ENCODE measurements at regions of chr5 and their contacts with region 1.

Region 1: DNA sequence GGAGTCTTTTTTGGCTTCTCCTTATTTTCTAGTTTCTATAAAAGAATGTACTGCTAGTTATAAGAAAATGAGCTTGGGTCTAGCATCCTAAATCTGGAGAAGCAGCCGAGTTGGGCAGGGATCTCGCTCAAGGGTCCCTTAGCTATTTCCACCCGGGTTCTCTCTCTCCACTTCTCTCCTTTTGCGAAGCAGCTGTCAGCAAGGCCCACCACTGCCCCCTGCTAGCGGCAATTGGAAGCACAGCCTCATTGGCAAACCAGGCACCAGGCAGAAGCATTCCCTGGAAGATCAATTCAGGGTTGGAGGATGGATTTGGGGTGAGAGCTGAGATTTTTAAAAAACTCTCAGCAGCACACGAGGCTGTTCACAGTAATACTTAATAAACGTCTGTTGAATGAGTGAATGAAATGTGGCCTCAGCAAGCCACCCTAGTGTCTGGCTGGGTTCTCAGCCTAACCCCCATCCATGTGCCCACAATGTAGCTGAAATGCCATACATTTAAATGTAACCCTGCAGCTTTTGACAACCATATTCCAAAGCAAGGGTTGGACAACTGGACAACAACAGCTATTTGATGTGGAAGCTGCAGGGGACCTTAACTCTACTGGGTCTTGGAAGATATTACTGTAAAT is 34.6 kb upstream of the TNIP1 start:
- DNase-seq: no peak
- ATAC-seq: peak; percentile 82
- H3K4me3 ChIP-seq: no peak overlapping the region
- H3K27ac ChIP-seq: no peak overlapping the region
- H3K4me1 ChIP-seq: peaks cover 17% of the 10 kb centered on the region
- H3K27me3 ChIP-seq: no peaks in the 10 kb centered on the region
- CTCF ChIP-seq: peak; percentile 78 to 95 (median 94)
- EP300 ChIP-seq: no peak
- POLR2A ChIP-seq: no peak
- RAD21 ChIP-seq: peak; percentile 92

Region 2: GRCh38 chr5:150469718-150470469 is 645.5 kb before region 1 on chr5:
- CTCF ChIA-PET with region 1: no interaction called
- POLR2A ChIA-PET with region 1: no interaction called
- RAD21 ChIA-PET with region 1: no interaction called
- SMC1A ChIA-PET with region 1: no interaction called
- in situ Hi-C with region 1: no loop called
- intact Hi-C with region 1: no loop called
- DNase-seq: no peak
- ATAC-seq: no peak
- H3K4me3 ChIP-seq: no peak overlapping the region
- H3K27ac ChIP-seq: no peak overlapping the region
- H3K4me1 ChIP-seq: no peaks in the 10 kb centered on the region
- H3K27me3 ChIP-seq: no peaks in the 10 kb centered on the region
- CTCF ChIP-seq: no peak
- EP300 ChIP-seq: no peak
- POLR2A ChIP-seq: no peak
- RAD21 ChIP-seq: no peak

Region 3: DNA sequence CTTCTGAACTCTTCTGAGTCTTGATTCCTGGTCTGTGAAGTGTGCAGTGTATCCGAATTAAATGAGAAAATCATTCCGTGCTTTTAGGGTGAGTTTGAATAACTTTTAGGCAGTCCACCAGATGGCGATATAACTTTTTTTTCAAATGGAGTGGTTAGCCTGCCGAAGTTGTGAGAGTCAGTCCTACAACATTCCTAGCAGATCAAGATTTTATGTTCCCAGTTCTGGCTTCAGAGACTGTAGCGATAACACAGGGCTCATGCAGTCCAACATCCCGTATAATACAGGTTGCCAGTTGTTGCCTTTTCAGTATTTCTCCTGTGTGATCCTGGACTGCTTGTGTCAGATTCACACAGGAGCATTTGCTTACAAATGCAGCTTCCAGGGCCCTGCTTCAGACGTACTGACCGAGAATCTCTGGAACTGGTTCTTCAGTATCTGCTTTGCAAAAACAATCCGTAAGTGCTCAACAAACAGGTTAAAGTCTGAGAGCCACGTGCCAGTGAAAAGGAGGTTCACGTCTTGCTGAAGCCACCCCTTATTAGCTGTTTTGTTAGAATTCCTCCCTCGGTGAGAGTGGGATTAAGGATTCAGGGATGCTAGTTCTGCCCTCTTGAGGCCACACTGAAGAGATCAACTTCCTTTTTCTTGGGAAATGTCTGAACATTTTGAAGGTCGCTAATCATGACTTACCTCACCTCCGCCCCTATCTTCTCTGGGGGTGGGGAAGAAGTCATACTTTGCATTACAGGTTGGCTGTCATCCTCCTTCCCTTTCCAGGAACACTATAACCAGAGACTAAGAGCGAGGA is 314.1 kb before region 1 on chr5:
- CTCF ChIA-PET with region 1: interaction called, 22 read pairs
- POLR2A ChIA-PET with region 1: no interaction called
- RAD21 ChIA-PET with region 1: interaction called, 8 read pairs
- SMC1A ChIA-PET with region 1: interaction called, 5 read pairs
- in situ Hi-C with region 1: no loop called
- intact Hi-C with region 1: no loop called
- DNase-seq: no peak
- ATAC-seq: peak; percentile 83
- H3K4me3 ChIP-seq: no peak overlapping the region
- H3K27ac ChIP-seq: no peak overlapping the region
- H3K4me1 ChIP-seq: no peaks in the 10 kb centered on the region
- H3K27me3 ChIP-seq: no peaks in the 10 kb centered on the region
- CTCF ChIP-seq: peak; percentile 49 to 60 (median 52); a peak in 5 of 6 replicates
- EP300 ChIP-seq: no peak
- POLR2A ChIP-seq: no peak
- RAD21 ChIP-seq: peak; percentile 61

Region 4: GRCh38 chr5:150946351-150946905 is 169.0 kb before region 1 on chr5:
- CTCF ChIA-PET with region 1: no interaction called
- POLR2A ChIA-PET with region 1: no interaction called
- RAD21 ChIA-PET with region 1: no interaction called
- SMC1A ChIA-PET with region 1: no interaction called
- in situ Hi-C with region 1: no loop called
- intact Hi-C with region 1: no loop called
- DNase-seq: no peak
- ATAC-seq: no peak
- H3K4me3 ChIP-seq: no peak overlapping the region
- H3K27ac ChIP-seq: no peak overlapping the region
- H3K4me1 ChIP-seq: no peaks in the 10 kb centered on the region
- H3K27me3 ChIP-seq: no peaks in the 10 kb centered on the region
- CTCF ChIP-seq: no peak
- EP300 ChIP-seq: no peak
- POLR2A ChIP-seq: no peak
- RAD21 ChIP-seq: no peak

Region 5: DNA sequence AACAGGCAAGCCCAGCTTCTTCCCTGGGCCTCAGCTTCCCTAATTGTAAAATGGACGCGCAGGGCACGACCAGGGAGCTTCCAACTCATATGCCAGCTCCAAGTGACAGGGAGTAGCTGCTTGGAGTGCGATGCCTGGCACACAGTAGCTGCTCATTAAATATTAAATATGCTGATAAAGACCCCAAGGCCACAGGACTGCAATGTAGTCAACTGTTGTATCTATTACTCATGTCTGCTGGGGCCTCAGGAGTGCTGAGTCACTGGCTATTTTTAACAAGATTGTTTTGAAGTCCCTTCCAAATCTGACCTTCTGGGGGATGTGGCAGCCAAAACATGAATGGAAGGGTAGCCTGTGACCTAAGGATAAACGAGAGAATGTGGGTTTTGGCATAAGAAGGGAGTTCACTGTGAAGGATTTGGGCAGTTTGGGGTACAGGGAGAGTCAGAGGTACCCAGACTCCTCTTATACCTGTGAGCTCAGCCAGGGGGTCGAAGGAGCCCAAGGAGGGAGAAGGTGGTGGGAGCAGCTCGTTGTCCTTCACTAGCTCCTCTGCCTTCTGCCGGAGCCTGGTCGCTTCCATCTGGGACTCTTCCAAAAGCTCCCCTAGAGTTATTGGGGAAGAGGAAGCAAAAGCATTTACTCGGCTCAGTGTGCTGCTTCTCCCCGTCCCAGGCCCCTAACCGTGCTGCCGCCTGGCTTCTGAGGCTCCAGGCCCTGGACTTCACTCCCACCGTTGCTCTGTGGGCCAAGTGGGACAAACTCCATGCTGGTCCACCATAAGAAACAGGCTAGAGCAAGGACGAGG is 52.0 kb before region 1 on chr5:
- CTCF ChIA-PET with region 1: interaction called, 691 read pairs
- POLR2A ChIA-PET with region 1: interaction called, 7 read pairs
- RAD21 ChIA-PET with region 1: interaction called, 30 read pairs
- SMC1A ChIA-PET with region 1: interaction called, 97 read pairs
- in situ Hi-C with region 1: no loop called
- intact Hi-C with region 1: no loop called
- DNase-seq: no peak
- ATAC-seq: no peak
- H3K4me3 ChIP-seq: no peak overlapping the region
- H3K27ac ChIP-seq: no peak overlapping the region; the same call in 1 of the 2 replicates
- H3K4me1 ChIP-seq: peaks cover 82% of the 10 kb centered on the region
- H3K27me3 ChIP-seq: no peaks in the 10 kb centered on the region
- CTCF ChIP-seq: no peak
- EP300 ChIP-seq: no peak
- POLR2A ChIP-seq: no peak; the same call in 1 of the 2 replicates
- RAD21 ChIP-seq: no peak

Region 6: DNA sequence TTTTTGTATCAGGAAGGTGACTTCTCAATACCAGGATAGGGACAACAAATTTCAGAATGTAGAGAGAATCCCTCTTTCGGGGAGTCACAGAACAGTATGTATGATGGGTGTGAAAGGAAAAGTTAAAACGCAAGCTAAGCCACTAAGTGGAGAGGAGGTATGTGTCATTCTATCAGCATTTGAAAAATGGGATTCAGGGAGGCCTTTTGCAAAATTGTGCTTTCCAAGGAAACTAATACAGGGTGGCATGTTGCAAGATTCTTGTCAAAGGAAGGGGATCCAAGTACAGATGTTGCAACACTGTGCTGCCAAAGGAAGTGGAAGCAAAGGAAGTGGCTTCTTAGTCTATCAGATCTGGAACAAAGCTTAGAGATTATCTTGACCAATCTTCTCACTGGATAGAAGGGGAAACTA is 21.9 kb before region 1 on chr5:
- CTCF ChIA-PET with region 1: interaction called, 90 read pairs
- POLR2A ChIA-PET with region 1: interaction called, 13 read pairs
- RAD21 ChIA-PET with region 1: interaction called, 45 read pairs
- SMC1A ChIA-PET with region 1: interaction called, 66 read pairs
- in situ Hi-C with region 1: no loop called
- intact Hi-C with region 1: no loop called
- DNase-seq: no peak
- ATAC-seq: peak; percentile 2; the same call in 2 of the 3 replicates
- H3K4me3 ChIP-seq: peak overlapping the region; percentile 53
- H3K27ac ChIP-seq: peak overlapping the region; percentile 98
- H3K4me1 ChIP-seq: peaks cover 59% of the 10 kb centered on the region
- H3K27me3 ChIP-seq: no peaks in the 10 kb centered on the region
- CTCF ChIP-seq: no peak
- EP300 ChIP-seq: no peak
- POLR2A ChIP-seq: no peak
- RAD21 ChIP-seq: no peak

Region 7: DNA sequence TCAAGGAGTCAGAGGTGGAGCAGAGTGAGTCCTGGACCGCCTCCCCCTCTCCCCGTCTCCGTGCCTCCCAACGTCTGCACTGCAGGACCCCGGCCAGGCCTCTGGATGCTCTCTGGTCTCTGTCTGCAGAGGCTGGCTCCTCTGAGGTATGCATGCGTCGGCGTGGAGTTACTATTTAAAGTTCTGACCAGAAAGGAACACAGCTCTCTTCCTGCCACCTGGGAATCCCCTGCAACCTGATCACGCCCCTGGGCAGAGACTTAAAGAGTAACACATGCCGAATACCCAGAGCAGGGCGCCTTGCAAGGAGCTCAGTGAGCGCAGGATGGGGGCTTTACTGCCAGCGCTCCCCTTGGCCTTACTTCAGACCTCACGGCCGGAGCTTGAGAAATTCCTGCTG is 26.1 kb after region 1 on chr5:
- CTCF ChIA-PET with region 1: interaction called, 1,107 read pairs
- POLR2A ChIA-PET with region 1: interaction called, 8 read pairs
- RAD21 ChIA-PET with region 1: interaction called, 22 read pairs
- SMC1A ChIA-PET with region 1: interaction called, 1,132 read pairs
- in situ Hi-C with region 1: no loop called
- intact Hi-C with region 1: no loop called
- DNase-seq: no peak
- ATAC-seq: peak; percentile 90
- H3K4me3 ChIP-seq: peak overlapping the region; percentile 52
- H3K27ac ChIP-seq: peak overlapping the region; percentile 61
- H3K4me1 ChIP-seq: peaks cover 60% of the 10 kb centered on the region
- H3K27me3 ChIP-seq: no peaks in the 10 kb centered on the region
- CTCF ChIP-seq: no peak
- EP300 ChIP-seq: no peak
- POLR2A ChIP-seq: peak; percentile 67
- RAD21 ChIP-seq: 0 out of 2 replicates have a peak, but pooled peaks have one; percentile 13

Region 8: DNA sequence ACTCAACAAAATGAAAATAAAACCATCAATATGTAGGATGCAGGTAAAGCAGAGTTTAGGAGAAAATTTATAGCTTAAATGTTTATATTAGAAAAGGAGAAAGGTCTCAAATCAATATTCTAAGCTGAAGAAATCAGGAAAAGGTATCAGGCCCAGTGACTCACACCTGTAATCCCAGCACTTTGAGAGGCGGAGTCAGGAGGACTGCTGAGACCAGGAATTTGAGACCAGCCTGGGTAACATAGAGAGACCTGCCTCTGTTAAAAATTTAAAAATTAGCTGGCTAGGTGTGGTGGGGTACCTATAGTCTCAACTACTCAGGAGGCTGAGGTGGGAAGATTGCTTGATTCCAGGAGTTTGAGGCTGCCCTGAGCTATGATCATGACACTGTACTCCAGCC is 76.3 kb after region 1 on chr5:
- CTCF ChIA-PET with region 1: interaction called, 10 read pairs
- POLR2A ChIA-PET with region 1: no interaction called
- RAD21 ChIA-PET with region 1: no interaction called
- SMC1A ChIA-PET with region 1: interaction called, 3 read pairs
- in situ Hi-C with region 1: no loop called
- intact Hi-C with region 1: no loop called
- DNase-seq: no peak
- ATAC-seq: no peak
- H3K4me3 ChIP-seq: no peak overlapping the region
- H3K27ac ChIP-seq: no peak overlapping the region
- H3K4me1 ChIP-seq: peaks cover 11% of the 10 kb centered on the region
- H3K27me3 ChIP-seq: no peaks in the 10 kb centered on the region
- CTCF ChIP-seq: no peak
- EP300 ChIP-seq: no peak
- POLR2A ChIP-seq: no peak
- RAD21 ChIP-seq: no peak

Region 9: DNA sequence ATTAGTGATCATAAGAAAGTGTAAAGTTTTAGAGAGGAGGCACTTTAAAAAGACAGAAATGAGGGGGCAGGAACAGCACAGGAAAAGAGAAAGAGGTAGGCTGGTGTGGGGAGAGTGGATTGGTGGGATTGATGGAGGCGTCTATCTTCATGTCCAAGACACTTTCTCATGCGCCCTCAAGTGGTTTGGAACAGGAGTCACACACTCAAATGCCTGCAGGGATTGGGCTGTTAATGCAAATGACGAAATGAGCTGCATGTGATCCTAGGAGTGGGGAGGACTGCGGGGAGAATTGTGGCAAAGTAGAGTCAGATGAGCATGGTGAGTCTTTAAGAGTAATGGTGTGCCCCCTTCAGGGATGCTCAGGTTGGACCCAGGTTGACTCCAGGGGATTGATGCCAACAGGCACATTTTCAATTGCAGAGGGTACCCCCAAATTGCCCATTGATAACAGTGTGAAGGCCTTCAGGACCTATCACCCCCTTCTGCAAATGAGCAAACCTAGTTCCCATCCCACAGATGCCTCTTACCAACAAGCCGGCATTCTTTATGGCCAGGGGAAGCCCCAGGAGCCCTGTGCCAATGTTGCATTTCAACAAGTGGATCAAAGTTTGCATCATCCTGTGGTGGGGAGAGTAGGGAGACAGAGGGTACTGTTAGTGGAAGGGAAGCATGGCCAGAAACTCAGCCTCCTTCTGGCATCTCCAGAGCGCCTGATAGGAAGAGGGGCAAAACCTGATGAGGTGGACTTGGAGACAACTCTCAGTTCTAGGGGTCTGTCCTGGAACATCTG is 182.9 kb after region 1 on chr5:
- CTCF ChIA-PET with region 1: interaction called, 12 read pairs
- POLR2A ChIA-PET with region 1: no interaction called
- RAD21 ChIA-PET with region 1: interaction called, 3 read pairs
- SMC1A ChIA-PET with region 1: interaction called, 6 read pairs
- in situ Hi-C with region 1: no loop called
- intact Hi-C with region 1: no loop called
- DNase-seq: peak; percentile 26
- ATAC-seq: peak; percentile 98
- H3K4me3 ChIP-seq: no peak overlapping the region
- H3K27ac ChIP-seq: no peak overlapping the region
- H3K4me1 ChIP-seq: no peaks in the 10 kb centered on the region
- H3K27me3 ChIP-seq: no peaks in the 10 kb centered on the region; a peak in 1 of 4 replicates
- CTCF ChIP-seq: peak; percentile 72 to 82 (median 75)
- EP300 ChIP-seq: no peak
- POLR2A ChIP-seq: no peak
- RAD21 ChIP-seq: peak; percentile 83

Measured in GM12878 (cell line).